ENCODE measurements at regions of chr2 and their contacts with region 1.

Region 1: DNA sequence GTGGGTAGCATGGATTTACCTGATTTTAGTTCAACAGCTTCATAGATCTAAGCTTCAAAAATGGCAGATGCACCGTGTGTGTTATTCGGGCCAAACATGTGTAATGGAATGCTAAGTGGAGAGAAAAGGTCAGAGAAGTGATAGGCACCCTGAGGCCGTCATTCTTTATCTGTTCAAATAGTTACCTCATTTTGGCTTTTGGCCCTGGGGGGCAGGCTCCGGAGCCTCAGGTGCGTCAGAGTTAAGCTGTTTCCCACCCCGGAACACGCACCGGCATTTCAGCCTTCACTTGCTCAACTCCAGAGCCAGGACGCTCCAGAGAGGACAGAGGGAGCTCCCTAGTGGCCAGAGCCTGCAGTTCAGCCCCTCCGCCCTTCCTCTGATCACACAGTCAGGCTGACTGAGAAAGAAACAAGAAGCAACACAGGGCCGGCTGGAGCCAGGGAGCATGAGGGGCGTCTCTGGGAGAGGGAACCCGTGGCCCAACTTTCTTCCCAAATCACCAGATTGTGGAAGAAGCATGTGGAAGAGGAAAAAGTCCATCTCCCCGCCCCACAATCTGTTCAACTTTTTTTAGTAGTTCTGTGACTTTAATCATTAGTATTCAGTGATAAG is 135.2 kb upstream of the EPC2 start:
- DNase-seq: peak; percentile 92
- ATAC-seq: peak; percentile 100
- H3K4me3 Mint-ChIP-seq: peak overlapping the region; percentile 55
- H3K27ac Mint-ChIP-seq: peak overlapping the region; percentile 8
- H3K4me1 Mint-ChIP-seq: peaks cover 24% of the 10 kb centered on the region
- H3K27me3 Mint-ChIP-seq: peaks cover 3% of the 10 kb centered on the region

Region 2: DNA sequence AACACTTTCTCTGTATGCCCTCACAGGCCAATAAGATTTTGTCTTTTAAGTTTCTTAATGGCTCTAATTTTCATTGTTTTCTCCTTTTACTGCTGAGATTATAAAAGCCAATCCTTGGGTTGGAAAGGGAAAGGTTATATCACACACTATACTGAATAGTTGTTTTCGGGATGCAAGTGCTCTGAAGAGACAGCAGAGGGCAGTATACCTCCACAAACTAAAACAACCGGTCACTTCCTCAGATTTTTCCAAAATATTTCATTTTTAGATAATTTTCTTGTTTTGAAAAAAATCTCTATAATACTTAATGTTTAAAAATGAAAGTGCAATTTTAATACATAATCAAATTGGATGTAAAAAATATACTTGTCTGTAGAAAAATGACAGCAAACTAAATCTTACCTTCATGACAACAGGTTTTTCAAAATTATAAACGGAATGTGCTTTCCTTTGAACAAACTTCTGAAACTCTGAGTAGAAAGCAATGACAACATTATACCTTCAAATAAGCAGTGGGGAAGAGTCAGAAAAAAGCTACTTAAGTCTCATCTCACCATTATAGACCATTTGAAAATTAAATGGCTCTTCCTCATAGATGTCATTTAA is 571.5 kb before region 1 on chr2:
- CTCF ChIA-PET with region 1: interaction called, 34 read pairs
- POLR2A ChIA-PET with region 1: no interaction called
- DNase-seq: no peak
- ATAC-seq: no peak
- H3K4me3 Mint-ChIP-seq: no peak overlapping the region
- H3K27ac Mint-ChIP-seq: no peak overlapping the region
- H3K4me1 Mint-ChIP-seq: no peaks in the 10 kb centered on the region
- H3K27me3 Mint-ChIP-seq: no peaks in the 10 kb centered on the region

Region 3: DNA sequence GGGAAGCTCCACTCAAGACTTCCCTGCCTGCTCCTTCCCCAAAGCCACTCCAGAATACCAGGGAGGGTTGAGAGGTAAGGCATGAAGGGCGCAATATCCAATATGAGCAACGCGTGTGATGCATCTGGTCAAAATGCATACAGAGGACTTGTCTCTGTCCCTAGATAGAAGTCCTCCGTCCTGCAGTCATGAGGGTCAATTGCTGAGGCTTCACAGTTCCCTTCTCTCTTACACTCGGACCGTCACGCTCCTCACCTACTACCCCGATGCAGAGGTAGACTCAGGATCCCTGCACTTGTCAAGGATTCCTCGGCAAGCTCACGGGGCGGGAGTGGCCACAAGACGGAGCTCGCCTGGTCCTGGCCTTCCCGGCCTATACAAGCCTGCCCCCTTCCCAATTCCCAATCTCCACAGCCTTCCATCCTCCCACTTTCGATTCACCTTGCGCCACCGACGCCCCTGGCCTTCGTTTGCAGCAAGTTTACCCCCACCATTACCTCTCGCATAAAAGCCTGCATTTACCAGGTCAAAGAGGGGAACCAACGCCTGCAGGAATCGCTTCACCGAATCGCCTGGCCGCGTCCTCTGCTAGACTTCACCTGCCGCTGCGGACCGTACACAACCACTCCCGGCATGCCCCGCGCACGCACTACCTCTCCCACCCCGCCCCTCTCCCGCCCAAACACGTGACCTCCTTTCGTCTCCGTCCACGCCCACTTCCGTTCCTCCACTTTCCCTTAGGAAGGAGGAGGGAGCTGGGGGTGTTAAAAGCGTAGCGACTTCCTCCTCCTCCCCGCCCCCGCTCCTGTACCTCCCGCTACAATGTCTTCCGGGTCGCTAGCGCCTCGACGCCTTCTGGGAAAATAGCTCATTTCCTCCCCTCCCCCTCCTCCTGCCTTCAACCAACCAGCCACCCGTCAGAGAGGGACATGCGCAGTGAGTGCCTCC is 489.0 kb before region 1 on chr2 and contains the start of gene ORC4:
- CTCF ChIA-PET with region 1: interaction called, 12 read pairs
- POLR2A ChIA-PET with region 1: no interaction called
- DNase-seq: peak; percentile 99
- ATAC-seq: peak; percentile 90
- H3K4me3 Mint-ChIP-seq: peak within 1 kb of the TSS; percentile 99
- H3K27ac Mint-ChIP-seq: peak within 1 kb of the TSS; percentile 95
- H3K4me1 Mint-ChIP-seq: peaks cover 42% of the 10 kb centered on the region
- H3K27me3 Mint-ChIP-seq: no peaks in the 10 kb centered on the region
- total RNA-seq, gene ORC4: 25.2 to 31.5 TPM

Region 4: DNA sequence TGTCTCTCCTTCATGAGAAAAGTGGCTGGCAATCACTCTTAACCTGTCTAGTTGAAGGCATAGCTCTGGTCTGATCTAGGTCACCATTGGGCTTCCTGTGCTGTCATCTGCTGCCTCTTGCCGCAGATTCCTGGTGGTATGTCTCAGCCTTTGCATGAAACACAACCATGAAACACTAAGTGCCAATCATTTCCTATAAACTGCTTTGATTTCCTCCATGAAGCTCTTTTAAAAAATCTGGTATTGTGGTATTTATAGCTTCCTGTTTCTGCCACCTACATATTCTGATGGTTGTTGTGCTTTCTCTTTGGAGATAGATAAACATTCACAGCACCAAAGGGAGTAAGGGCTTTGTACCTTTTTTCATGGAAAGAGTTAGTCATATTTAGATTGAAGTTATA is 15.1 kb after region 1 on chr2:
- CTCF ChIA-PET with region 1: interaction called, 71 read pairs
- POLR2A ChIA-PET with region 1: interaction called, 10 read pairs
- DNase-seq: peak; percentile 74
- ATAC-seq: peak; percentile 84
- H3K4me3 Mint-ChIP-seq: peak overlapping the region; percentile 17
- H3K27ac Mint-ChIP-seq: peak overlapping the region; percentile 87
- H3K4me1 Mint-ChIP-seq: peaks cover 75% of the 10 kb centered on the region
- H3K27me3 Mint-ChIP-seq: no peaks in the 10 kb centered on the region

Region 5: GRCh38 chr2:148599107-148599991 is 90.0 kb after region 1 on chr2:
- CTCF ChIA-PET with region 1: no interaction called
- POLR2A ChIA-PET with region 1: no interaction called
- DNase-seq: no peak
- ATAC-seq: no peak
- H3K4me3 Mint-ChIP-seq: no peak overlapping the region
- H3K27ac Mint-ChIP-seq: no peak overlapping the region
- H3K4me1 Mint-ChIP-seq: peaks cover 10% of the 10 kb centered on the region
- H3K27me3 Mint-ChIP-seq: peaks cover 2% of the 10 kb centered on the region

Region 6: DNA sequence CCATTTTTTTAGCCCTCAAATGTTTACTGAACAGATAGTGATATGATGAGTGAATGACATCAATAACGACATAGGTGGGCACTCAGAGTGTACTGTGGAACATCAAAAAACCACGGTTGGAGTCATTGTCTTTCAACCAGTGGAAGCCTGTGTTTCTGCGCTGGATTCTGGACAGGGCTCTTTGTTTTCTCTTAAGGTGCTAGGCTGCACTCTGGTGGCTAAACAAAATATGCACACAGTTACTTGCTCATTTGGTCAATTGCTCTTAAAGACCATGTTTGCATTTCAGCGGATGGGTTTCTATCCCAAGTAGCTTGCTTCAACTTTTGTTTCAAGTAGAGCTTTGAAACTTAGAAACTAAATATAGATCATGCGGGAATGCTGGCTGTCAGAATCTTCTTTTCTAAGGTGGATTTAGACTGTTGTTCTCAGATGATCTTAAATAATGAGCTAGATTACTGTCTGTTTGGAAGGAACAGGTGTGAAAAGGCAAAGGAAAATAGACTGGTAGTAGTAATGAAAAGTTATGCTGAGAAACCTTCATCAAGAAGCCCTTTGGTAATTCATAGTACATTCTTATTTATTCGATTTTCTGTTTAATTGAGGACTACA is 480.6 kb after region 1 on chr2:
- CTCF ChIA-PET with region 1: interaction called, 11 read pairs
- POLR2A ChIA-PET with region 1: no interaction called
- DNase-seq: peak; percentile 70
- ATAC-seq: peak; percentile 82
- H3K4me3 Mint-ChIP-seq: no peak overlapping the region
- H3K27ac Mint-ChIP-seq: no peak overlapping the region
- H3K4me1 Mint-ChIP-seq: no peaks in the 10 kb centered on the region
- H3K27me3 Mint-ChIP-seq: no peaks in the 10 kb centered on the region

Measured in activated CD8-positive, alpha-beta T cell treated with anti-CD3 and anti-CD28 coated beads, Interleukin-2, amount 10 ng/mL, durations not matched to agents 7 days and 5 days (primary cell).